Mucosa of descending colon (tissue), 3 donors: ENCODE measurements at regions of chr4 and their contacts with region 1.

Region 1: GRCh38 chr4:6974138-6974848 is 64.7 kb downstream of the TBC1D14 start:
- DNase-seq: peak in 2 of 3 donors; percentile 84 to 91
- ATAC-seq: peak; percentile 92
- H3K4me3 ChIP-seq: no peak overlapping the region
- H3K4me1 ChIP-seq: peaks cover 12% of the 10 kb centered on the region
- CTCF ChIP-seq: peak; percentile 97

Region 2: DNA sequence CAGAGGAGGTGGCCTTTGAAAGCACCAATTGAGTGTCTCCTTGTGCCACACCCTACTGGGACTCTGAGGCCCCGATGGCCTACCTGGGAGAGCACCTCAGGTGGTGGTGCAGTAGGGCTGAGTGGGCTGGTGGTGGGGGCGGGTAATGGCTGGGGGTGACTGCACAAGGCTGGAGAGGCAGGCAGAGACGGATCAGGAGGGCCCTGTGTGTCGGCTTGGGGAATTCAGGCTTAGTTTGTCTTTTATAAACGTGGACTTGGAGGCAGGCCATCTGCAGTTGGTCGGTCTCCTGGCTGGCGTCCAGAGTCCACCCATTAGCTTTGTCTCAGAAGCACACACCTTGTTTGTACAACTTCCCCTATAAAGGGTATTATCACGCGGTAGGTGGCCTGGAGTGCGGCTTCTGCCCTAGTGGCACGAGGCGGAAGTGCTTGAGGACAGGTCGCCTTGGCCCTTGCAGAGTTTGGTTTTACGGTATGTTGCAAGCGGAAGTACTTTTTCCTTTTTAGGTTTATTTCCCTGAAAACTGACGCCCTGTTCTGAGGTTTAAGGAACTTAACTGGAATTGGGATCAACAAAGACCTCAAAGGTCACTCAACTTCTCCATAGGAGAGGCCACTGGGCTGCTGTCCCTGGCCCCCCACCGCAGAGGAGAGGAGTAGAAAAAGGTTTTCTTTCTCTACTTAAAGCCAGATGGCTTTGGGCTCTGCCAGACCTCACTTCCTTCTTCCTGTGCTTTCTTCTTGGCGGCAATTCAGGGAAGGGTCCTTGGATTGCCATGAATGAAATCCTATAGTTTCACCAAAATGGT is 56.6 kb before region 1 on chr4:
- intact Hi-C with region 1: loop called in 1 of 2 experiments (anchors 10 kb)
- DNase-seq: peak; percentile 93 to 97 (median 94)
- ATAC-seq: peak; percentile 91
- H3K4me3 ChIP-seq: no peak overlapping the region
- H3K4me1 ChIP-seq: peaks cover 63% of the 10 kb centered on the region
- CTCF ChIP-seq: peak; percentile 73

Region 3: GRCh38 chr4:7070729-7071511 is 96.6 kb after region 1 on chr4:
- intact Hi-C with region 1: loop called in 1 of 2 experiments (anchors 10 kb)
- DNase-seq: peak; percentile 82 to 95 (median 94)
- ATAC-seq: peak; percentile 52
- H3K4me3 ChIP-seq: no peak overlapping the region
- H3K4me1 ChIP-seq: peaks cover 14% of the 10 kb centered on the region
- CTCF ChIP-seq: peak; percentile 98